HepG2 (cell line): ENCODE measurements at regions of chr20 and their contacts with region 1.

Region 1: DNA sequence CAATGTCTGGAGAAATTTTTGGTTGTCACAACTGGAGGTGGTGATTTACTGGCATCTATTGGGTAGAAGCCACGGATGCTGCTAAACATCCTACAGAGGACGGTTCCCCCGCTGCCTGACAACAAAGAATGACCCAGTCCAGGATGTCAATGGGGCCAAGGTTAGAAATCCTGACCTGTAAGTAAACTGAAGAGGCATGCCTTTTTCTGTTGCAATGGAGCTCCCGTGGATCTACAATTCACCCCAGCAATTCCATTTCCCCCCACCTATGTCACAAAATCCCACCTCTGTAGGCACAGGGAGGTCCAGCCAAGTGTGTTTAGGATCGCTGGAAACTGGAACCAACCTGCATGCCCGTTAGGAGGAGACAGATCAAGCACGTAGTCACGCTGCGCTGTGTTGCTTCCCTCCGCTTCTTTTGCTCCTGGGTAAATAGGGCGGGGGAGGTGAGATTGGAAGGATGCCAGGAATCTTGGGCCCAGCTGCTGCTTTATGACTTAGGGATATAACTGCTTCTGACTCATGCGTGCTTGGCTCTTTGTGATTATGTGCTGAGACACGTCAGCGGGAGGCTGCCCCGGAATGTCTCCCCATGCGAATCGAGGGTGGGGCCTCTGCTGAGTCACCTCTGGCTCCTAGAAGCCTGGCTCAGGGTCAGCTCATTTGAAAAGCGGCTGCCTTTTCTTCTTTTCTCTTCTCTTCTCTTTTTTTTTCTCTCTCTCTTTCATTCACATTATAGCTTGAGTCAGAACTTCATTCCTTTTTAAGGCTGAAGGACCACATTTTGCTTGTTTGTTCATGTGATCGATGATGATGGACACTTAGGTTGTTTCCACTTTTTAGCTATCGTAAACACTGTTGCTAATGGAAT is 12.4 kb upstream of the PEDS1 start:
- DNase-seq: peak; percentile 100
- ATAC-seq: peak; percentile 92
- H3K4me3 ChIP-seq: peak overlapping the region; percentile 45 to 63 (median 51)
- H3K27ac ChIP-seq: peak overlapping the region; percentile 96
- H3K4me1 ChIP-seq: peaks cover 80% of the 10 kb centered on the region
- H3K27me3 ChIP-seq: no peaks in the 10 kb centered on the region
- CTCF ChIP-seq: peak; percentile 39; the same call in 1 of the 2 replicates
- EP300 ChIP-seq: peak in 1 of 2 experiments; percentile 83
- POLR2A ChIP-seq: peak; percentile 85
- RAD21 ChIP-seq: peak; percentile 49; the same call in 1 of the 2 replicates

Region 2: GRCh38 chr20:50054626-50055511 is 111.0 kb before region 1 on chr20:
- CTCF ChIA-PET with region 1: no interaction called
- POLR2A ChIA-PET with region 1: no interaction called
- in situ Hi-C with region 1: no loop called
- intact Hi-C with region 1: no loop called
- DNase-seq: peak; percentile 67
- ATAC-seq: peak; percentile 73
- H3K4me3 ChIP-seq: peak overlapping the region; percentile 38 to 71 (median 49)
- H3K27ac ChIP-seq: no peak overlapping the region
- H3K4me1 ChIP-seq: peaks cover 51% of the 10 kb centered on the region
- H3K27me3 ChIP-seq: peaks cover 0 to 20% of the 10 kb centered on the region in 2 experiments; a peak in 3 of 5 replicates
- CTCF ChIP-seq: no peak; the same call in 1 of the 2 replicates
- EP300 ChIP-seq: peak; percentile 35 to 55; a peak in 2 of 4 replicates
- POLR2A ChIP-seq: no peak
- RAD21 ChIP-seq: no peak

Region 3: GRCh38 chr20:50138479-50139393 is 27.2 kb before region 1 on chr20:
- CTCF ChIA-PET with region 1: interaction called, 7 read pairs
- POLR2A ChIA-PET with region 1: interaction called, 16 read pairs
- in situ Hi-C with region 1: no loop called
- intact Hi-C with region 1: loop called (anchors 2 kb)
- DNase-seq: peak; percentile 73
- ATAC-seq: peak; percentile 68
- H3K4me3 ChIP-seq: peak overlapping the region in 1 of 3 experiments; percentile 25; a peak in 1 of 6 replicates
- H3K27ac ChIP-seq: peak overlapping the region; percentile 33
- H3K4me1 ChIP-seq: peaks cover 40% of the 10 kb centered on the region
- H3K27me3 ChIP-seq: no peaks in the 10 kb centered on the region
- CTCF ChIP-seq: peak; percentile 64
- EP300 ChIP-seq: no peak
- POLR2A ChIP-seq: no peak
- RAD21 ChIP-seq: peak; percentile 66

Region 4: GRCh38 chr20:50146732-50147662 is 18.9 kb before region 1 on chr20:
- CTCF ChIA-PET with region 1: no interaction called
- POLR2A ChIA-PET with region 1: interaction called, 89 read pairs
- in situ Hi-C with region 1: no loop called
- intact Hi-C with region 1: loop called (anchors 2 kb)
- DNase-seq: no peak
- ATAC-seq: no peak
- H3K4me3 ChIP-seq: no peak overlapping the region
- H3K27ac ChIP-seq: peak overlapping the region; percentile 0
- H3K4me1 ChIP-seq: peaks cover 63% of the 10 kb centered on the region
- H3K27me3 ChIP-seq: no peaks in the 10 kb centered on the region
- CTCF ChIP-seq: no peak
- EP300 ChIP-seq: no peak
- POLR2A ChIP-seq: no peak
- RAD21 ChIP-seq: no peak

Region 5: GRCh38 chr20:50153485-50154377 is 12.2 kb before region 1 on chr20 and contains the start of gene PEDS1:
- CTCF ChIA-PET with region 1: interaction called, 3 read pairs
- POLR2A ChIA-PET with region 1: interaction called, 89 read pairs
- in situ Hi-C with region 1: no loop called
- intact Hi-C with region 1: loop called (anchors 1 kb)
- DNase-seq: peak; percentile 83
- ATAC-seq: peak; percentile 95
- H3K4me3 ChIP-seq: peak within 1 kb of the TSS; percentile 91 to 98 (median 96)
- H3K27ac ChIP-seq: peak within 1 kb of the TSS; percentile 73
- H3K4me1 ChIP-seq: peaks cover 72% of the 10 kb centered on the region
- H3K27me3 ChIP-seq: peaks cover 0 to 4% of the 10 kb centered on the region in 2 experiments; a peak in 1 of 5 replicates
- CTCF ChIP-seq: no peak
- EP300 ChIP-seq: 0 out of 4 replicates have a peak, but pooled peaks of 1 of the 2 experiments have one; percentile 18
- POLR2A ChIP-seq: peak; percentile 89 to 93
- RAD21 ChIP-seq: peak; percentile 64
- total RNA-seq, gene PEDS1: 21.4 and 30.5 TPM in 2 replicates